K562 (cell line): ENCODE measurements at regions of chr1 and their contacts with region 1.

Region 1: GRCh38 chr1:224106568-224107281 is 7.2 kb upstream of the FBXO28 start:
- DNase-seq: peak in 3 of 4 experiments; percentile 23 to 70 (median 62)
- ATAC-seq: peak; percentile 96
- H3K4me3 ChIP-seq: no peak overlapping the region
- H3K27ac ChIP-seq: no peak overlapping the region; the same call in 2 of the 3 replicates
- H3K4me1 ChIP-seq: peaks cover 0 to 3% of the 10 kb centered on the region in 2 experiments; a peak in 2 of 5 replicates
- H3K27me3 ChIP-seq: no peaks in the 10 kb centered on the region
- CTCF ChIP-seq: peak; percentile 64 to 69 (median 67)
- EP300 ChIP-seq: no peak
- POLR2A ChIP-seq: no peak
- RAD21 ChIP-seq: peak; percentile 62 to 77

Region 2: DNA sequence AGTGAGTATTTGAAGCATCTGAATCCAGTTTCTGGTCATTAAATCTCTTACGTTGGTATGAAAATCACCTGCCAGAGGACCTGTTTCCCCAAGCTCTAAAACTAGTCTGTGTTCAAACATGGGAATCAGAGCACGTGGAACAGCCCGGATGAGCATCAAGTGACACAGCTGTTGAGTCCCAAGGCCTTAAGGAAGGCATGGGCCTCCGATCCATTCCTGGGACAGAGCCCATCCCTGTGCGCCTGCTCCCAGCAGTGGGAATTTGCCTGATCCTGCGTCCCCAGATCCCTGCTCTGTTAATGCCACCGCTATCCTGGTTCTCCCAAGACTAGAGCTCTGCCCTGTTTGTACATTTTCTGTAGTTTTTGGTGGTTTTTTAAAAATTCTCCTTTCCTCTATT is 61.2 kb before region 1 on chr1:
- CTCF ChIA-PET with region 1: no interaction called
- POLR2A ChIA-PET with region 1: no interaction called
- in situ Hi-C with region 1: no loop called
- intact Hi-C with region 1: no loop called
- DNase-seq: no peak
- ATAC-seq: no peak
- H3K4me3 ChIP-seq: no peak overlapping the region
- H3K27ac ChIP-seq: no peak overlapping the region
- H3K4me1 ChIP-seq: peaks cover 0 to 9% of the 10 kb centered on the region in 2 experiments; a peak in 3 of 5 replicates
- H3K27me3 ChIP-seq: no peaks in the 10 kb centered on the region
- CTCF ChIP-seq: no peak
- EP300 ChIP-seq: no peak
- POLR2A ChIP-seq: no peak
- RAD21 ChIP-seq: no peak

Region 3: GRCh38 chr1:224061436-224061835 is 45.3 kb before region 1 on chr1:
- CTCF ChIA-PET with region 1: no interaction called
- POLR2A ChIA-PET with region 1: no interaction called
- in situ Hi-C with region 1: no loop called
- intact Hi-C with region 1: loop called (anchors 5 kb)
- DNase-seq: peak; percentile 64 to 79 (median 76)
- ATAC-seq: peak; percentile 90
- H3K4me3 ChIP-seq: no peak overlapping the region
- H3K27ac ChIP-seq: no peak overlapping the region
- H3K4me1 ChIP-seq: peaks cover 4 to 6% of the 10 kb centered on the region in 2 experiments; a peak in 4 of 5 replicates
- H3K27me3 ChIP-seq: no peaks in the 10 kb centered on the region
- CTCF ChIP-seq: peak; percentile 30 to 58 (median 33); a peak in 2 of 6 replicates
- EP300 ChIP-seq: peak; percentile 58; the same call in 1 of the 2 replicates
- POLR2A ChIP-seq: no peak
- RAD21 ChIP-seq: no peak

Region 4: DNA sequence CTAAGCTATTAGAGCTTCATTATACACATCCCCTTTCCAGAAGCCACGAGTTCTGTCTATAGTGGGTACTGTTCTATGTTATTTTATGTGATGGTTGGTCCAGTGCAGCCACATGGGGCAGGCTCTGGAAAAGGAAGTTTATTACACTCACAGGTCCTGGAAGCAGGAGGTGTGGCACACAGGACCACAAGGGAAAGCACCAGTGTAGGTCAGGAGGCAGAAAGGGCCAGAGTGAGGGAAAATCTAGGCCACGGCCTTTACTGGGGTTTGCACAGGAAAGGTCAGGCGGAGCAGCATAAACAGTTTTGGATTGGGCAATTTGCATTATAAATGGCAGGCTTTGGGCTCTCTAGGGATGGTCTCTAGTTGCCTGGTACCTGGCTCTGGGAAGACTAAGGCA is 487.6 kb after region 1 on chr1:
- CTCF ChIA-PET with region 1: no interaction called
- POLR2A ChIA-PET with region 1: no interaction called
- in situ Hi-C with region 1: no loop called
- intact Hi-C with region 1: no loop called
- DNase-seq: no peak
- ATAC-seq: no peak
- H3K4me3 ChIP-seq: no peak overlapping the region
- H3K27ac ChIP-seq: no peak overlapping the region
- H3K4me1 ChIP-seq: no peaks in the 10 kb centered on the region
- H3K27me3 ChIP-seq: no peaks in the 10 kb centered on the region
- CTCF ChIP-seq: no peak
- EP300 ChIP-seq: no peak
- POLR2A ChIP-seq: no peak
- RAD21 ChIP-seq: no peak